Sciatic nerve (tissue), 2 donors: ENCODE measurements at regions of chr1 and their contacts with region 1.

Region 1: GRCh38 chr1:86965012-86965826 is 50.8 kb downstream of the HS2ST1 start:
- DNase-seq: no peak
- ATAC-seq: peak; percentile 48

Region 2: GRCh38 chr1:85762804-85763203 is 1202.4 kb before region 1 on chr1:
- intact Hi-C with region 1: no loop called
- DNase-seq: no peak
- ATAC-seq: no peak

Region 3: DNA sequence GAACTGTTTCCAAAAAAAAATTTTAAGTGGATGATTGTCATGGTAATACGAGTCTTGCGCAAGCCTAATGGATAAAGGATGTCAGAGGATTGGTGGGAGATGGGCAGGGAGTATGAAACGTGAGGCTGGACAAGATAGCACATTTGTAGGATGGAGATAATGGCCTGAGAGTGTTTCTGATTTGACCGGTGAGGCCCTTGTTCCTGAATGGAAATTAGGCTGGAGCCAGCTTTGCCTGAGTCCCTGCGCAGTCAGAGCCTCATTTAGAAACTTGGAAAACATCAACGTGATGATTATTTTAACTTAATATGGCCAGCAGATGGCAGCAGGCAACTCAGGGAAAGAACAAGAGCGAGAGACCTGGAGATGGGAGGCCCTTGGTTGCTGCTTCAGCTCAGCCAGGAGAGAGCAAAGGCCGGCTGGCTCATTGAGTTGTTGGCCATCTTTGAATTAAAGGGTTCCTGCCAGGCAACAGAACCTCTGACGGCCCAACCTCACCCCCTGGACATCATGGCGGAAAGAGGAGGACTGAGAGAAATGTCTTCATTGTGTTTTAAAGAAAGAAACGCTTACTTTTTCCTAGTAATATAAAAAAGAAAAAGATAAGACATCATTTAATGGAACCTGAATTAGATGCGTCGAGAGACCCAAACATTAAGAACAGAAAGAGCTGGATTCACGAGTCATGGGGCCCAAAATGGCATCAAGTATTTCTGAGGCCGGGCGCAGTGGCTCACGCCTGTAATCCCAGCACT is 131.6 kb before region 1 on chr1:
- intact Hi-C with region 1: loop called (anchors 10 kb)
- DNase-seq: peak; percentile 76
- ATAC-seq: peak; percentile 95

Region 4: GRCh38 chr1:86948212-86948611 is 17.0 kb before region 1 on chr1:
- intact Hi-C with region 1: no loop called
- DNase-seq: no peak
- ATAC-seq: peak; percentile 62